MCF 10A (cell line): ENCODE measurements at regions of chr6 and their contacts with region 1.

Region 1: GRCh38 chr6:107459283-107460082 is at the start of gene PDSS2:
- DNase-seq: peak; percentile 98
- H3K4me3 Mint-ChIP-seq: peak within 1 kb of the TSS; percentile 81
- H3K27ac Mint-ChIP-seq: peak within 1 kb of the TSS; percentile 94
- H3K4me1 Mint-ChIP-seq: peaks cover 21% of the 10 kb centered on the region
- H3K27me3 Mint-ChIP-seq: no peaks in the 10 kb centered on the region
- CTCF ChIP-seq: peak; percentile 47
- total RNA-seq, gene PDSS2: 10.2 and 11.1 TPM in 2 replicates

Region 2: GRCh38 chr6:107114213-107114905 is 345.1 kb before region 1 on chr6:
- CTCF ChIA-PET with region 1: no interaction called
- POLR2A ChIA-PET with region 1: interaction called, 7 read pairs
- intact Hi-C with region 1: loop called (anchors 1 kb)
- DNase-seq: peak; percentile 86
- H3K4me3 Mint-ChIP-seq: peak overlapping the region; percentile 71
- H3K27ac Mint-ChIP-seq: no peak overlapping the region
- H3K4me1 Mint-ChIP-seq: no peaks in the 10 kb centered on the region
- H3K27me3 Mint-ChIP-seq: no peaks in the 10 kb centered on the region
- CTCF ChIP-seq: peak; percentile 91

Region 3: DNA sequence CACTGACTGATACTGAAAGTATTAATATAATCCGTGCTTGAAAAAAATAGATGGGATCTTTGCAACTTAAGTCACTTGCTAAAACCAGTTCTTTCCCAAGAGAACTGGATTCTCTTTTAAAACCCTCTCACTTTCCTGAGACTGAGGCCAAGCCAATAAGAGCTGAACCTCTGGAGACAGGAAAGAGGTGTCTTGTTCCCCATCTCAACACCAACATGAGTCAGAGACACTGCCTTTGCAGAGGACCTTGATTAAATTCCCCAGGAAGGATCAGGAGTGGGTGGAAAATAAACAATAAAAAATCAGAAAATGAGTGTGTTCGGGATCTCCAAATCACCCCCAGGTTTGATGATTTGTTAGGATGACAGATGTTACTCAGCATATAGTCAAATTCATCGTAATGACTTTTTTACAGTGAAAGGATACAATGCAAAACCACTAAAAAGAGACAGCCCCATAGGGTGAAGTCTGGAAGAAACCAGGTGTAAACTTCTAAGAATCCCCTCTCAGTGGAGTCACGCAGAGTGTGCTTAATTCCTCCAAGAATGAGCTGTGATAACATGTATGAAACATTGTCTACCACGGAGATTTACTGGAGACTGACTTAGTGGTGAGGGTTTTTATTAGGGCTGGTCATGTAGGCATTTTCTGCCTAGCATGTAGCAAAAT is 221.4 kb before region 1 on chr6:
- CTCF ChIA-PET with region 1: interaction called, 11 read pairs
- POLR2A ChIA-PET with region 1: interaction called, 21 read pairs
- intact Hi-C with region 1: loop called (anchors 2 kb)
- DNase-seq: peak; percentile 93
- H3K4me3 Mint-ChIP-seq: no peak overlapping the region
- H3K27ac Mint-ChIP-seq: peak overlapping the region; percentile 13
- H3K4me1 Mint-ChIP-seq: peaks cover 31% of the 10 kb centered on the region
- H3K27me3 Mint-ChIP-seq: no peaks in the 10 kb centered on the region
- CTCF ChIP-seq: no peak

Region 4: DNA sequence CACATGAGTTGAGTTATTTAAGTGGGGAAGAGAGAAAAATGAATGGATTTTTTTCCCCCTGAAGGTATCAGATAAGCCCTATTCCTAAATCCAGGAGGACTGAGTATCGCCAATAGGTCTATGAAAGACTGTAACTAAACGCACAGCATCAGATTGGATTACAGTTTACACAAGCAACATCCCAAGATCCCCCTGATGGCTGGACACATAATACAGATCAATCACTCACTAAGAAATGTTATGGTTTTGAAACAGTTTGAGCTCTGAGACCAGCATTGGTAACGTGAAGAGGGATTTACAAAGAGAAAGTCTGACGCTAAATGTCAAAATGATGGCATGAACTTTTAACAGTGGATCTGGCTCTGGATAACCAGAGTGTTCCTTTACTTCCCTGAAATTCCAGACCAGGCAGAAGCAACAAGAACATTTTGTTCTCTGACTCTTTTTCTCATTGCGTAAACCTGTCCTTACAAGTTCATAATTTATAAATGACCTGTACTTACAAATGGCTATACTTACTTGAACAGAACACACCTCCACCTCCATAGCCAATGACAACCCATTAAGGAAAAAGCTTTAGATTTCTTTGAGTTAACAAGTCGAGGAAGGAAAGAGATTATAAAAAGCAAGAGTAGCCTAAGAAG is 212.4 kb before region 1 on chr6:
- CTCF ChIA-PET with region 1: interaction called, 4 read pairs
- POLR2A ChIA-PET with region 1: interaction called, 31 read pairs
- intact Hi-C with region 1: loop called (anchors 2 kb)
- DNase-seq: peak; percentile 93
- H3K4me3 Mint-ChIP-seq: peak overlapping the region; percentile 65
- H3K27ac Mint-ChIP-seq: peak overlapping the region; percentile 95
- H3K4me1 Mint-ChIP-seq: peaks cover 25% of the 10 kb centered on the region
- H3K27me3 Mint-ChIP-seq: no peaks in the 10 kb centered on the region
- CTCF ChIP-seq: no peak

Region 5: DNA sequence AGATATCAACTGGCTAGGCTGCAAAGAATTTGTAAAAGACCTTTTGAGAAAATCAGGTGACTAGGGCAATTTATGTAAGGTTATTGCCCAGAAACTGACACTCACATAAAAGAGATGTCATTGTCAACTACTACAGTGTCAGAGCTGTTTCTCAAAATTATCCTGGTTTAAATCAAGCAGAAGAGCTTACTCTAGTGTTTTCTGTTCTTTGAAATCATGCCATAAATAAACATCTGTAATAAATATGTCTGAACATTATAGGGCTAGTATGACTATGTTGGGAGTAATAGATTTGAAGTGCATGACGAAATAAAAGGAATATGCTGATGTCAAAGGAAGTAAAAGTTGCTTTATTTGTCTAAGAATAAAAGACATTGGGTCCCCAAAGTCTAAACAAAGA is 10.9 kb after region 1 on chr6:
- CTCF ChIA-PET with region 1: interaction called, 3 read pairs
- POLR2A ChIA-PET with region 1: interaction called, 15 read pairs
- intact Hi-C with region 1: no loop called
- DNase-seq: no peak
- H3K4me3 Mint-ChIP-seq: no peak overlapping the region
- H3K27ac Mint-ChIP-seq: no peak overlapping the region
- H3K4me1 Mint-ChIP-seq: no peaks in the 10 kb centered on the region
- H3K27me3 Mint-ChIP-seq: peaks cover 63% of the 10 kb centered on the region
- CTCF ChIP-seq: no peak

Region 6: DNA sequence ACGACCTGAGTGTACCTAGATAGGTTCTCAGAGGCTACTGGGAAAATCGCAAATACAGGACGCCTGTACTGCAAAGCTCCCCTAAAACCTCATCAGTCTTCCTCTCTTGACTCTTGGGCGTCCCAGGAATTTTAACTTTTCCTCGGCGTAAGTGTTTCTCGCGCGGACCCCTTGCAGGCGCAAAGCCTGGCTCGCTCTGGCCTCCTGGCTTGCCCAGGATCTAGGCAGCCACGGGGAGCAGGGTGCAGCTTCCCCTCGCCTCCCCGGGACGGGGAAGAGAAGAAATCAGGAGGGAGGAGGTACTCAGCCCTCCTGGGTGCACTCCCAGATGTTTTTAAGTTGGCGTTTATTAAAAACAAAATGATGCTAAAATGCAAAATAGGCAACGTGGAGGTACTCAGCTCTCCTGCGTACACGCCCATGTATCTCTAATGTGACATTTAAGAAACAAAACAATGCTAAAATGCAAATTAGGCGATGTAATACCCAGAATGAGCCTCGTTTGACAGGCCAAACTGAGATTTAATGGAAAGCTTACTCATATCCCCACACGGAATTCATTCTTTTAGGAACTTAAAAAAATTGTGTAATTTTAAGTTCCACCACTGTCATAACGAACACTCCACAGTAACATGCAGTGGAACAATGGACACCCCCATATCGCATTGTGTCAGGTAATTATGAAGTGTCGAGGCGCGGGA is 28.8 kb after region 1 on chr6:
- CTCF ChIA-PET with region 1: interaction called, 3 read pairs
- POLR2A ChIA-PET with region 1: interaction called, 11 read pairs
- intact Hi-C with region 1: no loop called
- DNase-seq: no peak
- H3K4me3 Mint-ChIP-seq: peak overlapping the region; percentile 75
- H3K27ac Mint-ChIP-seq: no peak overlapping the region
- H3K4me1 Mint-ChIP-seq: peaks cover 10% of the 10 kb centered on the region
- H3K27me3 Mint-ChIP-seq: peaks cover 59% of the 10 kb centered on the region
- CTCF ChIP-seq: no peak